Cardiac septum (tissue), 1 donor: ENCODE measurements at regions of chr1 and their contacts with region 1.

Region 1: GRCh38 chr1:45011837-45012638 is at the start of gene UROD:
- DNase-seq: peak; percentile 94
- total RNA-seq, gene UROD: 70.3 TPM

Region 2: DNA sequence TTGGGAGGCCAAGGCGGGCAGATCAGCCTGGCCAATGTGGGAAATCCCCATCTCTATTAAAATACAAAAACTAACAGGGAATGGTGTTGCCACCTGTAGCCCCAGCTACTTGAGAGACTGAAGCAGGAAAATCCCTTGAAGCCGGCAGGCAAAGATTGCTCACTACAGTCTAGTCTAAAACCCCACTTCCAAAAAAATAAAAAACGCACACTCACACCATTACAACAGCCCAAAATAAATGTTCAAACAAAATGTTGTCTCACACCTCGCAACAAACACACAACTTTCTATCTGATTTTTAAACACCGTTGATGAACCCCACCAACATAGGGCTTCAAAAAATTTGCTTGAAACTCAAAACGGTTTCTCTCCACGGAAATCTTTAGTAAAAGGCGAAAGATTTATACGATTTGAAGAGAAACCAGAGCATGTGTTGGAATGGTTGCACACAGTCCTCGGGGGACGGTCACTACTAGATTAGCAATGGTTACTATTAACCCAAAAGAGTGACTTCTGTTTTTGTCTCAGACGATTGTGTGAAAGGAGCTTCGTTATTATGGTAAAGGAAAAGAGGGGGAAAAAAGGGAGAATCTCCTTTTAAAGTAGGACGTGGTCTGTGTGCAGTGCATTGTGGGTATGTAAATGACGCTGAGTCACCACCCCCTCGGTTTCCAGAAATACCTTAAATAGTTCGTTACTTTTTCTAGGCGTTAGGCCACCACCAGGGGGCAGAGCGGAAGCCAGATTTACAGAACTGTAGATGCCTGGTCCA is 281.1 kb before region 1 on chr1 and contains the start of gene RNU5D-1:
- intact Hi-C with region 1: loop called (anchors 5 kb)
- DNase-seq: peak; percentile 96
- total RNA-seq, gene RNU5D-1: not detected

Region 3: GRCh38 chr1:44799770-44800584 is 212.1 kb before region 1 on chr1 and contains the start of gene PLK3:
- intact Hi-C with region 1: loop called (anchors 5 kb)
- DNase-seq: peak; percentile 100
- total RNA-seq, gene PLK3: 8.4 TPM

Region 4: GRCh38 chr1:44835738-44836675 is 176.0 kb before region 1 on chr1:
- intact Hi-C with region 1: loop called (anchors 5 kb)
- DNase-seq: peak; percentile 91

Region 5: GRCh38 chr1:44970317-44970716 is 41.7 kb before region 1 on chr1:
- intact Hi-C with region 1: no loop called
- DNase-seq: no peak

Region 6: GRCh38 chr1:44985747-44986359 is 26.2 kb before region 1 on chr1:
- intact Hi-C with region 1: loop called (anchors 1 kb)
- DNase-seq: no peak

Region 7: GRCh38 chr1:45490626-45491486 is 478.8 kb after region 1 on chr1 and contains the start of gene TESK2:
- intact Hi-C with region 1: loop called (anchors 2 kb)
- DNase-seq: peak; percentile 98
- total RNA-seq, gene TESK2: 1.0 TPM

Region 8: GRCh38 chr1:45550401-45551351 is 538.6 kb after region 1 on chr1 and contains the start of gene AKR1A1:
- intact Hi-C with region 1: loop called (anchors 10 kb)
- DNase-seq: peak; percentile 95
- total RNA-seq, gene AKR1A1: 47.3 TPM